ENCODE measurements at regions of chr21 and their contacts with region 1.

Region 1: GRCh38 chr21:22842875-22843274 is 1844.7 kb downstream of the NCAM2 start:
- DNase-seq: no peak
- ATAC-seq: no peak
- H3K4me3 ChIP-seq: no peak overlapping the region
- H3K27ac ChIP-seq: no peak overlapping the region
- H3K4me1 ChIP-seq: no peaks in the 10 kb centered on the region
- H3K27me3 ChIP-seq: no peaks in the 10 kb centered on the region
- CTCF ChIP-seq: no peak
- POLR2A ChIP-seq: no peak

Region 2: GRCh38 chr21:22758478-22758877 is 84.4 kb before region 1 on chr21:
- intact Hi-C with region 1: loop called in 1 of 10 experiments (anchors 10 kb)
- DNase-seq: no peak
- ATAC-seq: no peak
- H3K4me3 ChIP-seq: no peak overlapping the region
- H3K27ac ChIP-seq: no peak overlapping the region
- H3K4me1 ChIP-seq: no peaks in the 10 kb centered on the region
- H3K27me3 ChIP-seq: no peaks in the 10 kb centered on the region
- CTCF ChIP-seq: no peak
- POLR2A ChIP-seq: no peak

Region 3: DNA sequence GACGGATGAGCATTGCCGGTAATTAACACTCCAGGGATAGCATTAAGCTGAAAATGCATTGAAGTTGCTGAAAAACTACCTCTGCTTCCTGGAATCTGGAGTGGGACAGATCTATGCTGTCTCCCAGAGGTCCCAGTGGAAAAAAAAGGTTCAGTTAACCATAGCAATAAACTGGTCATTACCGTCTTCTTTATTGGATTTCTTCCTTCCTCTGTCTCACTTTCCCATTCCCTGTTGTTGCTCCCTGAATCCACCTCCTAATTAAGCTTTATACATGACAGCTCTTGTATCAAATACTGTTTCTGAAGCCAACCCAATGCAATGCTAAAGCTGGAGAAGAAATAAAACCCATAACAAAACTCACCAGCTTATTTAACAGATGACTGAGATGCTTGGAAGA is 38.7 kb before region 1 on chr21:
- intact Hi-C with region 1: loop called in 1 of 10 experiments (anchors 2 kb)
- DNase-seq: no peak
- ATAC-seq: no peak
- H3K4me3 ChIP-seq: no peak overlapping the region
- H3K27ac ChIP-seq: no peak overlapping the region
- H3K4me1 ChIP-seq: no peaks in the 10 kb centered on the region
- H3K27me3 ChIP-seq: no peaks in the 10 kb centered on the region
- CTCF ChIP-seq: no peak
- POLR2A ChIP-seq: no peak

Measured in heart left ventricle (tissue), 16 donors.